ENCODE measurements at regions of chr18 and their contacts with region 1.

Region 1: DNA sequence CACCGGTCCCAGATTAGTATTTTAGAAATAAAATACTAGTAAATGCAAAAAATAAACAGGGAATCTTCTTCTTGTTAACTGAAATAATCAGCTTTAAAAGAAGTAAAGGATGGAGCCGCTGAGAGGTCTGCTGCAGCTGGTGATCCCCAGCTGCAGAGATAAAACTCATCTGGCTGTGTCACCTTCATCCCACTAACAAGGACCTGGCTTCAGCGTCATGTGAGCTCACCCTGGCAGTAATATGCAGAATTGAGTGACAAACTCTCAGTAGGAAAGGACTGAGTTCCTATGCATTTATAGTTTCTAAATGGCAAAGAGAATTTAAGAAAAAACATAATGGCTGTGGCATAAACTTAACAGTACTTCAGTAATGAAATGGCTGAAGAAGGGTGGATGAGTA is 27.3 kb downstream of the VPS4B start:
- H3K4me3 Mint-ChIP-seq: no peak overlapping the region
- H3K27ac Mint-ChIP-seq: no peak overlapping the region
- H3K4me1 Mint-ChIP-seq: no peaks in the 10 kb centered on the region
- H3K27me3 Mint-ChIP-seq: no peaks in the 10 kb centered on the region

Region 2: GRCh38 chr18:63356272-63356896 is 38.6 kb before region 1 on chr18:
- intact Hi-C with region 1: loop called (anchors 5 kb)
- H3K4me3 Mint-ChIP-seq: no peak overlapping the region
- H3K27ac Mint-ChIP-seq: no peak overlapping the region
- H3K4me1 Mint-ChIP-seq: no peaks in the 10 kb centered on the region
- H3K27me3 Mint-ChIP-seq: no peaks in the 10 kb centered on the region

Measured in dendritic cell treated with granulocyte-macrophage colony-stimulating factor and Interleukin-4, amounts not matched to agents 40 ng/mL and 50 ng/mL, for 4 days (primary cell).